ENCODE measurements at regions of chr3 and their contacts with region 1.

Region 1: DNA sequence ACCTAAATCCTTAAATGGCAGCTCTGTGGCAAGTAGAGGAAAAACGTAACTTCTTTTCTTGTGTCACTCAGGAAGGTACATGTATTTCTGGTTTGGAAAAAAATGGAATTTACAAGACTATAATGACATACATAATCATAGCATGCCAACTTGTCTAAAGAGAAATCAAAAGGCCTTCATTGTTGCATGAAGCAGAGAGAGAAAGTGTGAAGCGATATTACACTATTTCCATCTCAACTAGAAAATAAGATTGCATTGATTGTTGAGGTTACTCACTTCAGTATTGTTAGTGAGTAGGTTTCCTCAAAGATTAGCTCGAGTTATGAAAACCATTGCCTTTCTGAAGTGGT is 67.2 kb upstream of the GCSAM start:
- DNase-seq: no peak
- H3K4me3 ChIP-seq: no peak overlapping the region
- H3K27ac ChIP-seq: no peak overlapping the region
- H3K4me1 ChIP-seq: no peaks in the 10 kb centered on the region
- H3K27me3 ChIP-seq: no peaks in the 10 kb centered on the region
- CTCF ChIP-seq: no peak
- EP300 ChIP-seq: no peak
- POLR2A ChIP-seq: no peak

Region 2: DNA sequence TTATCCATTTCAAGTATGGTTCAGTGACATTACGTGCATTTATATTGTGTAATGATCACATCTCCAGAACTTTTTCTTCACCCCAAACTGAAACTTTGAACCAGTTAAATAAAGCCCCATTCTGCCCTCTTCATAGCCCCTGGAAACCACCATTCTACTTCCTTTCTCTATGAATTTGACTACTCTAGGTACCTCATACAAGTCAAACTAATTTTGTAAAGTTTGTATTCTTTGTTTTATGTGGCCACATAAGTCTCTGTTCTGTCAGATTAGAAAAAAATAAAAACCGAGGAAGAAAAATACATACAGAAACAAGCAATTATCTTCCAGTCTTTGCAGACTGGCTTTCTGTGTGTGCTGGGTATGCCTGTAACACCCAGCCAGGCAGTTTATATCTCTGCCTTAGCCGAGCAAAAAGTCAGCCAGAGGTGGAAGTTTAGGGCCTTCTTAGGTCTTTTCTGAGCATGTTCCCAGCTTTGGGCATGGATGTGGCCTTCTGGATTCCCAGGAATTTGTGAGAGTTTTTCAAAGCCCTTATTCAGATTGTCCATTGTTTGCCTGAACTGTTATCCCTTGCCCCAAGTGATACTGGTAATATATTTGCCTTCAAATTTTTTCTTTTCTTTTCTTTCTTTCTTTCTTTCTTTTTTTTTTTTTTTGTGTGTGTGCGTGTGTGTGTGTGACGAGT is 1632.3 kb after region 1 on chr3:
- intact Hi-C with region 1: loop called in 1 of 4 experiments (anchors 5 kb)
- DNase-seq: no peak
- H3K4me3 ChIP-seq: no peak overlapping the region
- H3K27ac ChIP-seq: no peak overlapping the region
- H3K4me1 ChIP-seq: no peaks in the 10 kb centered on the region
- H3K27me3 ChIP-seq: no peaks in the 10 kb centered on the region
- CTCF ChIP-seq: no peak
- EP300 ChIP-seq: no peak
- POLR2A ChIP-seq: no peak

Measured in ovary (tissue), 10 donors.